IMR-90 (cell line): ENCODE measurements at regions of chrX and their contacts with region 1.

Region 1: DNA sequence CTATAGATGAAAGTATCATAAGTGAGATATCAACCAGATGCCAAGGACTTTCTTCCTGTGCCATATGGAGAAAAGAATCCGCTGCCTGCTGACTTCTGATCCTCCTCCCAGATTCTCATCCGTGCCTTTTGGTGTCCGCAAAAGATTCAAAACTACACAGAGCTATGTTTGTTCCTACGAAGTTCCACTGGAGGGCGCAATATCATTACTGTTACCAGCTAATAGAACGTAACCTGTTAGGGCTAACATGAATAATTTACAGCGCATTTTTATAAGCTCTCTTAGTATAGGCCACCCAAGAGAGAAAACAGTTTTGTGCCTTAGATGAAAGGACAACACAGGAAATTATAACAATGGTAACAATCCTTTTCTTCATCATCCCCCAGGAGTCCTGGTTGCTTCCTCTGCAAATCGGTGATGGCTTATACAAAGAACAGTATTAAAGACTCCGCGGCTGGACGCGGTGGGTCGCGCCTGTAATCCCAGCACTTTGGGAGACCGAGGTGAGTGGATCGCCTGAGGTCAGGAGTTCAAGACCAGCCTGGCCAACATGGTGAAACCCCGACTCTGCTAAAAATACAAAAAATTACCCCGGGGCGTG is 22.8 kb upstream of the CENPVL3 start:
- DNase-seq: peak; percentile 60
- ATAC-seq: peak; percentile 70
- H3K4me3 ChIP-seq: no peak overlapping the region
- H3K27ac ChIP-seq: no peak overlapping the region
- H3K4me1 ChIP-seq: no peaks in the 10 kb centered on the region
- H3K27me3 ChIP-seq: peaks cover 6% of the 10 kb centered on the region
- CTCF ChIP-seq: peak; percentile 59
- POLR2A ChIP-seq: no peak
- RAD21 ChIP-seq: peak; percentile 70

Region 2: DNA sequence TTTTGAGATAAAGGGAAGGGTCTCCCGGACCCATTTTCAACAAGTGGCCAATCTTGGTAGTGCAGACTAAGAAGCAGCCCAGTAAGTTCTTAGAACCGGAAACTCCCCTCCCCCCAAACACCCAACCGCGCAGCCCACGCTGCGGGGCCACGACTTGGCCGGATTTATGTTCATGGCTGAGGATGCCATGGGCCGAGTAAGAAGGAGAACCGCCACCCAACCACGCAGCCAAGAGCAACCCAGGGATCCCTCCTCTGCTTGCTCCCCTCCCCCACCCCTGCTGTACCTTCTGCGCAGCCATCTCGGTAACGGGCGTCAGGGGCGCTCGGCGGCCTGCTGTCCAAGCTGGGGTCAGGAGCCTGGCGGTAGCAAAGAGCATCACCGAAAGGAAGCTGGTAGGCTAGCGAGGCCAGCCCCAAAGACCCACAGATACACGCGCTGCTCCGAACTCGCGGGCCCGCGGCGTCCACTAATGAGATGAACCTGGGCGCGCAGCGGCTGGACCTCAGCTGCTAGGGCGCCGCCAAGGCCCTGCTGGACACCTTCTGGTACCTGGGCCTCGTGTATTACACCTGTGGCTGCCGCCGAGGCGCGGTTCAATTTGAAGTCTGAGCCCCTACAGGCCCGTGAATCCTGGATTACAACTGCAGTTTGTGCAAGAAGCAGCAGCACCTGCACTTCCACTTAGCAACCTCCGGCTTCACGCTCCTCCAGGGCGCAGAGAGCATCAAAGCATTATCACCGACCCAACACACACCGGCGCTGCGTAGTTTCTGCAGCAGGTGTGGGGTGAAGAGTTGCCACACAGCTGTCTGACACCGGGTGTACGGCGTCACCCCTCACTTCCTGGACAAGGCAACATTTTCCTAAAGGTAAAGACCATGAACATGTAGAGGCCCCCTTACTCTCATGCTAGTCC is 245.5 kb before region 1 on chrX:
- CTCF ChIA-PET with region 1: no interaction called
- POLR2A ChIA-PET with region 1: no interaction called
- dilution Hi-C with region 1: no loop called
- in situ Hi-C with region 1: no loop called
- intact Hi-C with region 1: no loop called
- DNase-seq: no peak
- ATAC-seq: no peak; the same call in 1 of the 2 replicates
- H3K4me3 ChIP-seq: no peak overlapping the region
- H3K27ac ChIP-seq: no peak overlapping the region
- H3K4me1 ChIP-seq: no peaks in the 10 kb centered on the region
- H3K27me3 ChIP-seq: peaks cover 3% of the 10 kb centered on the region; the same call in 1 of the 2 replicates
- CTCF ChIP-seq: peak; percentile 1; the same call in 1 of the 2 replicates
- POLR2A ChIP-seq: no peak
- RAD21 ChIP-seq: no peak

Region 3: GRCh38 chrX:51476930-51477329 is 164.6 kb before region 1 on chrX:
- CTCF ChIA-PET with region 1: no interaction called
- POLR2A ChIA-PET with region 1: no interaction called
- dilution Hi-C with region 1: no loop called
- in situ Hi-C with region 1: no loop called
- intact Hi-C with region 1: no loop called
- DNase-seq: no peak
- ATAC-seq: no peak
- H3K4me3 ChIP-seq: no peak overlapping the region
- H3K27ac ChIP-seq: no peak overlapping the region
- H3K4me1 ChIP-seq: no peaks in the 10 kb centered on the region
- H3K27me3 ChIP-seq: no peaks in the 10 kb centered on the region; the same call in none of the 2 replicates
- CTCF ChIP-seq: no peak
- POLR2A ChIP-seq: no peak
- RAD21 ChIP-seq: no peak

Region 4: DNA sequence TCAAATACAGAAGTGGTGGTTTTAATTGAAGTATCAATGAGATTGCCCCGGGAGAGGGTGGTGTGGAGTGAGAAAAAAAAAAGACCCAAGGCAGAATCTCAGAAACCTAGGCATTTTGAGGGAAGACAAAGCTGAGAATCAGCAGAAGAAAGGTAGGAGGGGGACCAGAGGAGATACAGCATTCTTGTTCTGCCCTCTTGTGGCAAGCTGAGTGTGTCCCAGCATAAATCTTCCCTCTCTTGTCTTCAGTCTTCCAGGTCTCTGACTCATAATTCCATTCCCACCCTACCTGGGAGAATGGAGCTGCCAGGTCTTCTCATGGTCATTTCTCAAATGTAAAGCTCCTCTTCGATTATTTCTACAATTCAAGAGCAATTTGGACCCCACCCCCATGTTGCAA is 219.2 kb after region 1 on chrX:
- CTCF ChIA-PET with region 1: no interaction called
- POLR2A ChIA-PET with region 1: no interaction called
- dilution Hi-C with region 1: no loop called
- in situ Hi-C with region 1: no loop called
- intact Hi-C with region 1: loop called (anchors 2 kb)
- DNase-seq: peak; percentile 32
- ATAC-seq: peak; percentile 37; the same call in 1 of the 2 replicates
- H3K4me3 ChIP-seq: no peak overlapping the region
- H3K27ac ChIP-seq: no peak overlapping the region
- H3K4me1 ChIP-seq: peaks cover under 1% of the 10 kb centered on the region; the same call in 1 of the 2 replicates
- H3K27me3 ChIP-seq: no peaks in the 10 kb centered on the region
- CTCF ChIP-seq: peak; percentile 46
- POLR2A ChIP-seq: no peak
- RAD21 ChIP-seq: peak; percentile 49

Region 5: GRCh38 chrX:51892921-51893745 is 251.6 kb after region 1 on chrX and contains the start of gene MAGED1:
- CTCF ChIA-PET with region 1: no interaction called
- POLR2A ChIA-PET with region 1: no interaction called
- dilution Hi-C with region 1: no loop called
- in situ Hi-C with region 1: no loop called
- intact Hi-C with region 1: loop called (anchors 5 kb)
- DNase-seq: peak; percentile 95
- ATAC-seq: peak; percentile 86
- H3K4me3 ChIP-seq: peak within 1 kb of the TSS; percentile 97
- H3K27ac ChIP-seq: peak within 1 kb of the TSS; percentile 85
- H3K4me1 ChIP-seq: peaks cover 17% of the 10 kb centered on the region
- H3K27me3 ChIP-seq: no peaks in the 10 kb centered on the region
- CTCF ChIP-seq: no peak
- POLR2A ChIP-seq: peak; percentile 97
- RAD21 ChIP-seq: no peak
- total RNA-seq, gene MAGED1: 415 and 484 TPM in 2 replicates

Region 6: DNA sequence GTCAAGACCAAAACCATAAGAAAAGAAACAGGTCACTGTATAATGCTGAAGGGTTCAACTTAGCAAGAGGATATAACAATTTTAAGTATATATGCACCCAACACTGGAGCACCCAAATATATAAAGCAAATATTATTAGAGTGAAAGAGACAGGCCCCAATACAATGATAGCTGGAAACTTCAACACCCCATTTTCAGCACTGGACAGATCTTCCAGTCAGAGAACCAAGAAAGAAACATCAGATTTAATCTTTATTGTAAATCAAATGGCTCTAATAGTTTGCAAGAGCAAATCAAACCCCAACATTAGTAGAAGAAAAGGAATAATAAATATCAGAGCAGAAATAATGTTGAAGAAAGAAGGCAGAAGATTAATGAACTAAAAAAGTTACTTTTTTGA is 579.4 kb after region 1 on chrX:
- CTCF ChIA-PET with region 1: no interaction called
- POLR2A ChIA-PET with region 1: no interaction called
- dilution Hi-C with region 1: no loop called
- in situ Hi-C with region 1: loop called (anchors 25 kb)
- intact Hi-C with region 1: no loop called
- DNase-seq: no peak
- ATAC-seq: no peak
- H3K4me3 ChIP-seq: no peak overlapping the region
- H3K27ac ChIP-seq: no peak overlapping the region
- H3K4me1 ChIP-seq: no peaks in the 10 kb centered on the region
- H3K27me3 ChIP-seq: peaks cover 2% of the 10 kb centered on the region; the same call in 1 of the 2 replicates
- CTCF ChIP-seq: no peak
- POLR2A ChIP-seq: no peak
- RAD21 ChIP-seq: no peak

Region 7: DNA sequence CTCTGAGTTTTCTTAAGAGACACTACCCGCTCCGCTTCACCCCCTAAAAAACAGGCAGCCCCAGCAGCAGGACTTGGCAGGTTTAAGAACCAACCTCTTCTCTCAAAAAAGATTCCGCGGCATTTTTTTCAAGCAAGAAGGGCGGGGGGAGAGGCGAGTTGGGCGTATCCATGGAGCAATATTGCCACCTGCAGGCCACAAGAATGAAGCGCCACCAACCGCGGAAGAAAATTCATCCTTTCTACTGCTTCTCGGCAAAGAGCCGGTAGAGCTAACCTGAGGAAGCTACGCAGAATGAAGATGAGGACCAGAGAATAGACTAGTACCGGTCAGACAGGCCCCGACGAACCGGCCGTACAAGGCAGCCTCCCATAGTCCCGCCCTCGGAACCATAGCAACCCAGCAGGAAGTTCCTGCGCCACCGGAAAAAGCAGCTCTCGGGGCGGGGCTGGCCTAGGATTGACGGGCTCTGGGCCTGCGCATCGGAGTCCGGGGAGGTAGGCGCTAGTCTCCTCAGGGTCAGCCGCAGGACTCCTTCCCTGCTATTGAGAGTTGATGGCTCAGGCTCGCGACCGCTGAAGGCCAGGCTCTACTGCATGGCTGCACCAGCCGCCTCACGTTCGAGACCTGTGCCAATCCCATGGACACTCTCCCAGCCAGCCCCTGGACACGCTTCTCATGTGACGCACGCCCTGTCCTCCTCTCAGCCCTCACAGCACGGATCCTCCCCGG is 620.1 kb after region 1 on chrX:
- CTCF ChIA-PET with region 1: no interaction called
- POLR2A ChIA-PET with region 1: no interaction called
- dilution Hi-C with region 1: no loop called
- in situ Hi-C with region 1: no loop called
- intact Hi-C with region 1: loop called (anchors 2 kb)
- DNase-seq: peak; percentile 85
- ATAC-seq: peak; percentile 100
- H3K4me3 ChIP-seq: peak overlapping the region; percentile 68
- H3K27ac ChIP-seq: peak overlapping the region; percentile 87
- H3K4me1 ChIP-seq: no peaks in the 10 kb centered on the region
- H3K27me3 ChIP-seq: peaks cover 2% of the 10 kb centered on the region
- CTCF ChIP-seq: peak; percentile 96
- POLR2A ChIP-seq: no peak; the same call in 1 of the 2 replicates
- RAD21 ChIP-seq: peak; percentile 89